Left colon (tissue), 2 donors: ENCODE measurements at regions of chr9 and their contacts with region 1.

Region 1: DNA sequence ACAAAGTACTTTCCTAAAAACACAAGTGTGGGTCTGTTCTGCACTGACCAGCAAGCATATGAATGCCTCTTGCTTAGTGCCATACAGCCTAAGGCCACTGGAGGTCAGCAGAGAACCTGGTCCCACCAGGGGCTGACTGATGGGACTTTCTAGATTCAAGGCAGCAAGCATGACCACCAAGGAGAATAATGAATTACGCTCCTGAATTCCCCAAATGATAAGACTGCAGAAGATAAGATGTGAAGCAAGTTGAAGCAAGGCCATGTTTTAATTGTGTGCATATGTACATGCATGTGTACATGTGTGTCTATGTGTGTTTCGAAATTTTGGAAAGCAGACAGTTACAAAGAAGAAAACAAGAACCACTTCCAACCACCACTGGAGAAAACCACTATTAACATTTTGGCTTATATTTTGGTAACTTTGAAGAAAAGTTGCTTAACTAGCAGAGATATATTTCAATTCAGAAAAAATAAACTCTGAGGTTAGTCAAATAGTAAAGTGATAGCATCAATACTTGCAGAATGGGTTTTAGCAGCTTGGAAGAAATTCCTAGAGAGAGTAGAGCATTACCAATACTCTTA is 70.5 kb downstream of the ERP44 start:
- DNase-seq: peak; percentile 54 to 75
- ATAC-seq: peak; percentile 90

Region 2: GRCh38 chr9:100084734-100085133 is 56.4 kb after region 1 on chr9:
- intact Hi-C with region 1: loop called in 1 of 2 experiments (anchors 10 kb)
- DNase-seq: no peak
- ATAC-seq: no peak

Region 3: GRCh38 chr9:100216178-100216787 is 188.0 kb after region 1 on chr9:
- intact Hi-C with region 1: loop called in 1 of 2 experiments (anchors 10 kb)
- DNase-seq: peak in 1 of 2 donors; percentile 63
- ATAC-seq: peak; percentile 72

Region 4: GRCh38 chr9:100322954-100323536 is 294.8 kb after region 1 on chr9:
- intact Hi-C with region 1: loop called in 1 of 2 experiments (anchors 10 kb)
- DNase-seq: peak in 1 of 2 donors; percentile 29
- ATAC-seq: peak; percentile 31